Activated T-helper 2 cell treated with anti-CD3 and anti-CD28 coated beads, Interferon-gamma antibody, Interleukin-2, Interleukin-4, amounts not matched to agents 10 μg/mL and 5 μg/mL and 100 μg/mL, durations not matched to agents 14 hours and 24 hours and 36 hours (primary cell): ENCODE measurements at regions of chr7 and their contacts with region 1.

Region 1: GRCh38 chr7:130982160-130982638 is 248.2 kb upstream of the KLF14 start:
- DNase-seq: no peak
- H3K4me3 Mint-ChIP-seq: no peak overlapping the region
- H3K27ac Mint-ChIP-seq: no peak overlapping the region
- H3K4me1 Mint-ChIP-seq: peaks cover 27% of the 10 kb centered on the region
- H3K27me3 Mint-ChIP-seq: no peaks in the 10 kb centered on the region

Region 2: DNA sequence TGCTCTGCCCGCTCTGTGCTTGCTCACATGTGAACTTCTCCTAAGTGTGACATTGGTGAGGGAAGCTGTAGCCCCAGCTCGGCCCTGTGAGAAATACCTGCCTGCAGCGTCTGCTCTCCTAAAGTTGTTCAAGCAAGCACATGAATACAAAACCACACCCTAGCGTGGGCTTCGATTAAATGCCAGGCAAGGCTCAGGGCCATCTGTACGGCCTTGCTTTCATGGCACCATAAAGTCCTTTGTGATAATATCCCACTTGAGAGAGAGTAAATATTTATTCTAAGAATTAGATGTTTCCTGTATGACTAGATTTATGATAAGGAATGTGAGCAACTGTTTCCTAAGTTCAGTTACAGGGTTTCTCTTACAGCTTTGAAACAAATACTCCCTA is 14.6 kb after region 1 on chr7:
- intact Hi-C with region 1: loop called (anchors 1 kb)
- DNase-seq: no peak
- H3K4me3 Mint-ChIP-seq: peak overlapping the region; percentile 66
- H3K27ac Mint-ChIP-seq: peak overlapping the region; percentile 90
- H3K4me1 Mint-ChIP-seq: peaks cover 66% of the 10 kb centered on the region
- H3K27me3 Mint-ChIP-seq: no peaks in the 10 kb centered on the region

Region 3: DNA sequence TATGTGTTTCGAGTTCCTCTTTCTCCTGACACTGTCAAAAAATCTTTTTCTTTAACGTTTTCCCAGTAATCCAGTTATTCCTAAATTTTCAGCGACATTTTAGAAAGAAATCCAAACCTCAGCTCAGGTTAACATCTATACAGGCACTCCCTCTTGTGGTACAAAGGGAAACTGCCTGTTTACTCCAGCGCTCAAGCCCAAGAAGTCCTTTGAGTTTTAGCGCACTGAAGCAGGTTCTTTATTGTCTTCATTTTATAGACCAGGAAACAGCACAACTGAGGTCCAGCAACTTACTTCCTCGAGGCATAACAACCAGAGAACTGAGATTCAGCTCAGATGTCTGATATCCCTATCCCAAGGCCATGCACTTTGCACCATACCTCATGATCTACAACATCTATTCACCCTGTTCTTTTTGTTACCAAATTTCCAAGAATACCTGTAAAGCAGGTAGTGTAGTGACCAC is 58.3 kb after region 1 on chr7:
- intact Hi-C with region 1: loop called (anchors 1 kb)
- DNase-seq: no peak
- H3K4me3 Mint-ChIP-seq: no peak overlapping the region
- H3K27ac Mint-ChIP-seq: no peak overlapping the region
- H3K4me1 Mint-ChIP-seq: peaks cover 33% of the 10 kb centered on the region
- H3K27me3 Mint-ChIP-seq: no peaks in the 10 kb centered on the region